SK-N-SH (cell line): ENCODE measurements at regions of chr11 and their contacts with region 1.

Region 1: DNA sequence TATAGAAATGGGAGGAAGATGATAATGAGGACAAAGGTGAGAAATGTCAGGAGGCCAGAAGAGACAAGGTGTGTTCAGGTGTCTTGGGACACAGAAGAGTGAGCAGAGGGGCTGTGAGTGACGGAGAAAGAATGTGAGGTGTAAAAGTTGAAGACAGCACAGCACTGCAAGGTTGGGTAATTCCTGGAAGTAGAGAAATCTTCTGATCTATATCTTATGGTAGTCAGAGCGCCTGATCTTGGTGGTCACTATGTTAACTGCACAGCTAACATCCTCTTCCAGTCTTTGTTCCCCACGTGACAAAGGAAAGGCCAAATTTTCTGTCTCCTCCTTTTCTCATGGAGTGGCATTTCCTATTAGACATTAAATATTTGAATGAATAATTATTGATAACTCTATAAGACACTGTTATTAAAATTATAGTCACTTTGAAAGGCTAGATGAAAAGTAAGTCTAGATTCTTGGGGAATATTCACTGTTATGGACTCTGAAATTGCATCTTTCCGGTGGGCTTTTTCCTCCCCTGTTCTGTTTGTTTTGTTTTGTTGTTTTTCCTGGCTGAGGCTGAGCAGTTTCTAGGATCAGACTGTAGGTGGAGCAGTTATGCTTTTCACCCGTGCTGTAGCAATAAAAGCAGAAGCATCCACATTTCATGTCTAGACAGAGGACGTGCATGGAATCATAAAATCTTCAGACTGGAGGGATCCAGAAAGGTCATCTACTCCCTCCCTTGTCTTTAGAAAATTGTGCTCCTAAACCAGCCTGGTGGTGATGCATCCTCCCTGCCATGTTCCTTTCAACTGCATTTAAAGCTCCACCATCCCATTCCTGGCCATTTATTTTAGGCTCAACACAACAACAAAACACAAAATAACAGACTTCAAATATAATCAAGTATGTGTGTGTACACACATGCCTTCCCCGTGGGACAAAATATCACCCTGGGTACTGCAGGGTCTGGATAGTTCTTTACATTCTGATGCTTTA is 26.6 kb downstream of the SC5D start:
- DNase-seq: peak; percentile 68
- H3K4me3 ChIP-seq: no peak overlapping the region; a peak in 1 of 4 replicates
- H3K27ac ChIP-seq: no peak overlapping the region
- H3K4me1 ChIP-seq: peaks cover 0 to 2% of the 10 kb centered on the region in 2 experiments; a peak in 1 of 4 replicates
- H3K27me3 ChIP-seq: no peaks in the 10 kb centered on the region; the same call in 1 of the 2 replicates
- CTCF ChIP-seq: peak; percentile 75
- EP300 ChIP-seq: no peak
- RAD21 ChIP-seq: peak; percentile 87

Region 2: DNA sequence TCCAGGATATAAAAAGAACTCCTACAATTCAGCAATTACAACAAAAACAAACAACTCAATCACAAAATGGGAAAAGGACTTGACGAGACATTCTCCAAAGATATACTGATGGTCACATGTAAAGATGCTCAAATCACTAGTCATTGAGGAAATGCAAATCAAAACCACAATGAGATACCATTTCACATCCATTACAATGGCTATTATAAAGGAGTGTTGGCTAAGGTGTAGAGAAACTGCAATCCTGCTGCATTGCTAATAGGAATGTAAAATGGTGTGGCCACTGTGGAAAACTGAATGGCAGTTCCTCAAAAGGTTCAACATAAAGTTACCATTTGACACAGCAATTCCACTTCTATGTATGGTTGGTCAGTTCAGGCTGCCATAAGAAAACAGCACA is 307.1 kb before region 1 on chr11:
- CTCF ChIA-PET with region 1: no interaction called
- POLR2A ChIA-PET with region 1: no interaction called
- DNase-seq: no peak
- H3K4me3 ChIP-seq: no peak overlapping the region
- H3K27ac ChIP-seq: no peak overlapping the region
- H3K4me1 ChIP-seq: no peaks in the 10 kb centered on the region
- H3K27me3 ChIP-seq: no peaks in the 10 kb centered on the region
- CTCF ChIP-seq: no peak
- EP300 ChIP-seq: no peak
- RAD21 ChIP-seq: no peak

Region 3: GRCh38 chr11:121334973-121335710 is 16.0 kb after region 1 on chr11:
- CTCF ChIA-PET with region 1: interaction called, 25 read pairs
- POLR2A ChIA-PET with region 1: no interaction called
- DNase-seq: no peak
- H3K4me3 ChIP-seq: no peak overlapping the region
- H3K27ac ChIP-seq: no peak overlapping the region
- H3K4me1 ChIP-seq: no peaks in the 10 kb centered on the region; a peak in 1 of 4 replicates
- H3K27me3 ChIP-seq: no peaks in the 10 kb centered on the region
- CTCF ChIP-seq: no peak; the same call in 1 of the 2 replicates
- EP300 ChIP-seq: no peak
- RAD21 ChIP-seq: no peak